OCI-LY7 (cell line): ENCODE measurements at regions of chr4 and their contacts with region 1.

Region 1: DNA sequence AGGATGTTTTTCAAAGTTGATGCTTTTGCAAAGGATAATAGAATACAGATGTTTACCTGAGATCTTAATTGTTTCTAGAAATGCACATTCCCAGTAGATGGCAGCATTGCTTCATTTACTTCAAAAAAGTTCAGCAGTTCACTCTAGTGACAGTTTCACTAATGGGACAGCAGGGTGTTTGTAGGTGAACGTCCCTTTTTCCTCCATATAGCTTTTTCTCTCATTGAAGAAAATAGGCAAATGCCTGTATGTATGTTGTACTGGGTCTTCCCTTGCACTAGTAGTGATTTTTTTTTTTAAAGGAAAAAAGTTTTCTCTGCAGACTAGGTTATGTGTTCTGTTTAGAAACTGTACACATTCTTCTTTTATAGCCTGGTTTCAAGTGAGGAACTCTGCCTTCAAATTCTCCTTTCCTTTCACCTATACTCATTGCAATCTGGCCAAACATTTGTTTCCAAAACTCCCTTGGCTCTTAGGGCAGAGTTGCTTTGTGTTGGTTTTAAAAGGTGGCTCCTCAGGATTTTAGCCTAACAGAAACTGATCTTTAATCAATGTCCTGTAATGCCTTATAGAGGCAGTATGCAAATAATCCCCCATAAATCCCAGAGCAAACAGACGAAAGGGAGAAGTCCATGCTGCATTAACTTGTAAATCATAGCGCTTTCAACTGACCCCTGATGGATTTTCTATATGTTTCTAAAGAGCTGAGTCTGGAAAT is 86.3 kb downstream of the EGF start:
- DNase-seq: peak; percentile 83
- H3K4me3 ChIP-seq: no peak overlapping the region
- H3K27ac ChIP-seq: no peak overlapping the region
- H3K4me1 ChIP-seq: peaks cover 31% of the 10 kb centered on the region
- CTCF ChIP-seq: peak; percentile 91

Region 2: GRCh38 chr4:109798866-109799265 is 200.2 kb before region 1 on chr4:
- CTCF ChIA-PET with region 1: no interaction called
- POLR2A ChIA-PET with region 1: no interaction called
- intact Hi-C with region 1: no loop called
- DNase-seq: no peak
- H3K4me3 ChIP-seq: no peak overlapping the region
- H3K27ac ChIP-seq: no peak overlapping the region
- H3K4me1 ChIP-seq: no peaks in the 10 kb centered on the region
- CTCF ChIP-seq: no peak

Region 3: GRCh38 chr4:109846395-109847098 is 152.5 kb before region 1 on chr4:
- CTCF ChIA-PET with region 1: no interaction called
- POLR2A ChIA-PET with region 1: no interaction called
- intact Hi-C with region 1: no loop called
- DNase-seq: no peak
- H3K4me3 ChIP-seq: no peak overlapping the region
- H3K27ac ChIP-seq: no peak overlapping the region
- H3K4me1 ChIP-seq: no peaks in the 10 kb centered on the region
- CTCF ChIP-seq: no peak

Region 4: GRCh38 chr4:110049951-110050925 is 51.2 kb after region 1 on chr4:
- CTCF ChIA-PET with region 1: no interaction called
- POLR2A ChIA-PET with region 1: no interaction called
- intact Hi-C with region 1: loop called (anchors 2 kb)
- DNase-seq: peak; percentile 58
- H3K4me3 ChIP-seq: no peak overlapping the region
- H3K27ac ChIP-seq: no peak overlapping the region
- H3K4me1 ChIP-seq: no peaks in the 10 kb centered on the region
- CTCF ChIP-seq: peak; percentile 92

Region 5: GRCh38 chr4:110211007-110211769 is 212.2 kb after region 1 on chr4:
- CTCF ChIA-PET with region 1: no interaction called
- POLR2A ChIA-PET with region 1: no interaction called
- intact Hi-C with region 1: loop called (anchors 5 kb)
- DNase-seq: peak; percentile 66
- H3K4me3 ChIP-seq: no peak overlapping the region
- H3K27ac ChIP-seq: no peak overlapping the region
- H3K4me1 ChIP-seq: no peaks in the 10 kb centered on the region
- CTCF ChIP-seq: peak; percentile 95

Region 6: GRCh38 chr4:110310795-110311194 is 311.8 kb after region 1 on chr4:
- CTCF ChIA-PET with region 1: no interaction called
- POLR2A ChIA-PET with region 1: interaction called, 4 read pairs
- intact Hi-C with region 1: loop called (anchors 1 kb)
- DNase-seq: peak; percentile 3
- H3K4me3 ChIP-seq: no peak overlapping the region
- H3K27ac ChIP-seq: no peak overlapping the region
- H3K4me1 ChIP-seq: no peaks in the 10 kb centered on the region
- CTCF ChIP-seq: no peak

Region 7: DNA sequence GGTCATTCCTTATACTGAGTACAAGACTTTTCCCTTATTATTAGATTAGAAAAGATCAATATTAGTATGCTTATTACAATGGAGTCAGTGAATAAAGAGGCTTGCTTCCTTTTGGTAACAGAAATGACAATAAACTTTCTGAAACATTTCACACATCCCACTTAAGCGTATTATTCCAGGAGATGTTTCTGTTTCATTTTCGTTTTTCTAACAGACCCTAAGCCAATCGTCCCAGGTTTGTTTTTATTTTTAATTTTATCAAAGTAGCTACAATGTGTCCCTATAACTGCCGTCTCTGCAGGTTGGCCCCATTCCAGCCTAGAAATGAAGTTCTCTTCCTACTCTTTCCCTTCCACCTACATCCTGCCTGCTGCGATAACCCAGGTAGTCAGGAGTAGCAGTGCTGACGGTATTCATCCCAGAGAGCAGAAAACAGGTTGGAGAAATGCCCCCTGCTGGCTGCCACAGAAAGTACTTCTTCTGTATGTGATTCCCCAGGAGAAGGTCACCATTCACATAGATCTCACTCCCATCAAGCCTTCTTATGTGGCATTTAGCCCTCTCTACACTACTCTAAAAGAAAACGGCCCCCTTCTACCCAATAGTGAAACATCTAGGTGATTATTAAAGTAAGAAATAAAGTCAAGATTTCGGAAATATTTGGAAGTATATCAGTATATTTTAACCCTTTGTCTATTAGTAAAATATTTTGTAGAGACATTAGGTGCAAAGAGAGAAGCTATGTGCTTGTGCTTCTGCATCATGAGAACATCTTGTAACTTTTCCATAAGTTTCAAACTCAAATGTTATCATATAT is 517.3 kb after region 1 on chr4:
- CTCF ChIA-PET with region 1: interaction called, 11 read pairs
- POLR2A ChIA-PET with region 1: interaction called, 3 read pairs
- intact Hi-C with region 1: loop called (anchors 1 kb)
- DNase-seq: peak; percentile 78
- H3K4me3 ChIP-seq: peak overlapping the region; percentile 67
- H3K27ac ChIP-seq: no peak overlapping the region
- H3K4me1 ChIP-seq: peaks cover 8% of the 10 kb centered on the region
- CTCF ChIP-seq: peak; percentile 88

Region 8: GRCh38 chr4:110704748-110705439 is 705.9 kb after region 1 on chr4:
- CTCF ChIA-PET with region 1: no interaction called
- POLR2A ChIA-PET with region 1: no interaction called
- intact Hi-C with region 1: loop called (anchors 10 kb)
- DNase-seq: peak; percentile 87
- H3K4me3 ChIP-seq: peak overlapping the region; percentile 55
- H3K27ac ChIP-seq: peak overlapping the region; percentile 95
- H3K4me1 ChIP-seq: peaks cover 67% of the 10 kb centered on the region
- CTCF ChIP-seq: no peak